ENCODE measurements at regions of chr16 and their contacts with region 1.

Region 1: DNA sequence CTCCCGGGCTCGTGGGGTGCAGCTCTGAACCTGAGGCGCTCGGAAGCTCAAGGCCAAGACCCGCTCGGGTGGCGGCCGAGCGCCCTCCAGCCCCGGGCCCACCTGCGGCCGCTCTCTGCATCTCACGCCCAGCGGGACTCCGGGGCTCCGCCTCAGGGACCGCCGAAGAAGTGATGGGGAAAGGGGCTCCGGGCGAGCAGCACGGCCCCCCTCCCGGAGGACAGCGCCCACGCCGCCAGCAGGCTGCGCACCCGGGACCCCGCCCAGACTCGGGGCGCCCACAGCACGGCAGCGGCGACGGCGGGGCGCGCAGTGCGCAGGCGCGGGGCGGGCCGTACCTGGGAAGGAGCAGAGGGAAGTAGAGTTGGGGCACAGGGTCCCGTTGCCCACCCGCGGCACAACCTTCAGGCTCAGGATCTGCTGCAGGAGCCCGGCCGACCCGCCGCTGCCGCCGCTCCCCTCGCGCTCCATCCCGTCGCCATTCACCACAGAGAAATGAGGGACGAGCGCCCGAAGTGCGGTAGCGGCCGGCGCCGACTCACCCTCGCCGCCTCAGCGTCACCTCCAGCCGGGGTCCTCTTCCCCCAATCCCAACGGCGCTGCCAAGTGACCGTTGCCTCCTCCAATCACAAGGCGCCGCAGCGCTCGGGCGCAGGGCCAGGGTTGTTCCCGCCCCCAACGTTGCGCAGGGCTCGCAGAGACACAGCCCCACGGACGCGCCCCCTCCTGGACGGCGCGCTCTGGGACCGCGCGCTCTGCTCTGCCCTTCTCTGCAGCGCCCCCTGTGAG is at the start of gene TMEM170A:
- DNase-seq: peak; percentile 96
- ATAC-seq: peak; percentile 91
- H3K4me3 ChIP-seq: peak within 1 kb of the TSS; percentile 78 to 92
- H3K27ac ChIP-seq: peak within 1 kb of the TSS; percentile 94
- H3K4me1 ChIP-seq: peaks cover 3 to 26% of the 10 kb centered on the region in 2 experiments; a peak in 3 of 4 replicates
- H3K27me3 ChIP-seq: no peaks in the 10 kb centered on the region
- CTCF ChIP-seq: peak; percentile 100
- POLR2A ChIP-seq: peak; percentile 83
- RAD21 ChIP-seq: peak; percentile 81
- total RNA-seq, gene TMEM170A: 34.5 TPM

Region 2: DNA sequence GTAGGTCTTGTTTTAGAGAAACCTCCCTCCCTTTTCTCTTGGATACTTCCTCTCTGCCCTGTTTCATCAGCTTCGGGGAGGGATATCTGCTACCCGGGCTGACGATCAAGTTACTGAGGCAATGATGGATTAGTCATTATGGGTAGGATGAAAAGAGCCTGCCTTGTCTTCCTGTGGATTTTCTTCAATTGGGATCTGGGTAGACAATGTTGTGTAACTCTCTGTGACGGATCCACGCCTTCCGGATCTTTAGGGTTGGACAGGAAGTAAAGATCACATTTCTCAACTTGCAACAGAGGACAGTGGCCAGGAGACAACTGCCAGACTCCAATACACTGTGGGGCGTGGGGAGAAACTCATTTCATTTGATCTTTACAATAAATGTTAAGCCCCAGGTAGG is 42.2 kb after region 1 on chr16:
- CTCF ChIA-PET with region 1: no interaction called
- POLR2A ChIA-PET with region 1: no interaction called
- RAD21 ChIA-PET with region 1: no interaction called
- intact Hi-C with region 1: no loop called
- DNase-seq: peak; percentile 73
- ATAC-seq: peak; percentile 37
- H3K4me3 ChIP-seq: no peak overlapping the region; a peak in 1 of 4 replicates
- H3K27ac ChIP-seq: peak overlapping the region; percentile 13; the same call in 1 of the 2 replicates
- H3K4me1 ChIP-seq: peaks cover 24 to 37% of the 10 kb centered on the region in 2 experiments
- H3K27me3 ChIP-seq: no peaks in the 10 kb centered on the region
- CTCF ChIP-seq: no peak
- POLR2A ChIP-seq: no peak
- RAD21 ChIP-seq: no peak; the same call in 1 of the 2 replicates

Region 3: DNA sequence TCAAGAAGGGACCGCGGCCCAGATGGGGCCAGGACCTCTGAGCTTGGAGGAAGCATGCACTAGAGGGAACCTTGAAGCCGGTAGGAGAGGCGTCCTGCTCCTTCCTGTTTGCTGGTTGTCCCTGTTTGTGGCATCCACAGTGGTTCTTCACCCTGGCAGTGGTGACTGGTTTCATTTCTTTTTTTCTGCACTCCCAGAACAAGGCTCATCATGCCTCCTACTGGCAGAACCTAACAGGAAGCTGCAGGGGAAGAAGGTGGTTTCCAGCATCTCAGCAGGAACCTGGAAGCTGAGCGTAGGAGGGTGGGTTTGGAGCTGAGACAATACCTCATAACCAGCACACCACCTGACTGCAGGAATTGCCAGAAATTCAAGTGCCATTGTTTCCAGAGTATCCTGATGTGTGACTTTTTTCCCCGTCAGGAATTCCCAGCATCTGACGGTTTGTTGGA is 85.9 kb after region 1 on chr16:
- CTCF ChIA-PET with region 1: no interaction called
- POLR2A ChIA-PET with region 1: no interaction called
- RAD21 ChIA-PET with region 1: no interaction called
- intact Hi-C with region 1: loop called (anchors 2 kb)
- DNase-seq: no peak
- ATAC-seq: peak; percentile 38
- H3K4me3 ChIP-seq: no peak overlapping the region
- H3K27ac ChIP-seq: no peak overlapping the region
- H3K4me1 ChIP-seq: peaks cover 2 to 11% of the 10 kb centered on the region in 2 experiments; a peak in 2 of 4 replicates
- H3K27me3 ChIP-seq: no peaks in the 10 kb centered on the region
- CTCF ChIP-seq: peak; percentile 55 to 65 (median 58); a peak in 5 of 6 replicates
- POLR2A ChIP-seq: no peak
- RAD21 ChIP-seq: peak; percentile 73

Region 4: DNA sequence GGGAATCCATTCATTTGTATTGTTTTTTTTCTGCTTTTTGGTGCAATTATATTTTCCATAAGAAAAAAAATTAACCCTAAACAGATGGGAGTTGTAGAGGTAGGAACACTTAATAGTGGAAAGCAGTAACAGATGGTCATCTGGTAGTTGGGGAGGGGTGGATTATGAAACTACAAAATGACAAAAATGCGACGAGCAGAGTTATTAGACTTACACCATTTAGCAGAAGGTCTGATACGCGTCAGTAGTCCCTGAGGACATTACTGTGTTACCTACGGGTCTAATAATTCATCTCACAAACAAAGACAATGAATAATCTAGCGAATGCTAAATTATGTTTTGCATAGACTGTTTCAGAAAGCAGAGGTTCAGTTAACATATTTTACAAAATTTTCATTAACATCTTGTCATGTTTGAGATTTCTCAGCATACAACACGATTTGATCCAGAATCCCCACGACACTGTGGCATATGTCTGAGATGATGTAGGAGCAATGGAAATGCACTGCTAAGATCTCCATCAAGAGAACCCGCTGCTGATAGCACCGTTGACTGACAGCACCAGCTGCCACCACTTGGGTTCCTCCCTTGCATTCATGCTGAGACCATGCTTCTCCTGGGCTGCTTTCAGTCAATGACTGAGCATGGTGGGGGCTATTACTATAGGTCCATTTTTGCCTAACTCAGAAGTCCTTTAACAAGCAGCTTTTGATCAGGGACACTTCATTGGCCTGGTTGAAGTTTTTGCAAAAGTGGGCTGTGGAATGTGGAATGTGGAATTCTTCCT is 444.2 kb after region 1 on chr16:
- CTCF ChIA-PET with region 1: no interaction called
- POLR2A ChIA-PET with region 1: no interaction called
- RAD21 ChIA-PET with region 1: no interaction called
- intact Hi-C with region 1: no loop called
- DNase-seq: no peak
- ATAC-seq: no peak
- H3K4me3 ChIP-seq: no peak overlapping the region
- H3K27ac ChIP-seq: no peak overlapping the region
- H3K4me1 ChIP-seq: no peaks in the 10 kb centered on the region
- H3K27me3 ChIP-seq: no peaks in the 10 kb centered on the region; the same call in 1 of the 2 replicates
- CTCF ChIP-seq: no peak
- POLR2A ChIP-seq: no peak
- RAD21 ChIP-seq: no peak